ENCODE measurements at regions of chr6 and their contacts with region 1.

Region 1: GRCh38 chr6:157557559-157557958 is 176.6 kb downstream of the ZDHHC14 start:
- DNase-seq: no peak
- ATAC-seq: peak; percentile 29
- H3K4me3 Mint-ChIP-seq: peak overlapping the region; percentile 73
- H3K27ac Mint-ChIP-seq: peak overlapping the region; percentile 94
- H3K4me1 Mint-ChIP-seq: peaks cover 83% of the 10 kb centered on the region
- H3K27me3 Mint-ChIP-seq: no peaks in the 10 kb centered on the region
- CTCF ChIP-seq: no peak

Region 2: DNA sequence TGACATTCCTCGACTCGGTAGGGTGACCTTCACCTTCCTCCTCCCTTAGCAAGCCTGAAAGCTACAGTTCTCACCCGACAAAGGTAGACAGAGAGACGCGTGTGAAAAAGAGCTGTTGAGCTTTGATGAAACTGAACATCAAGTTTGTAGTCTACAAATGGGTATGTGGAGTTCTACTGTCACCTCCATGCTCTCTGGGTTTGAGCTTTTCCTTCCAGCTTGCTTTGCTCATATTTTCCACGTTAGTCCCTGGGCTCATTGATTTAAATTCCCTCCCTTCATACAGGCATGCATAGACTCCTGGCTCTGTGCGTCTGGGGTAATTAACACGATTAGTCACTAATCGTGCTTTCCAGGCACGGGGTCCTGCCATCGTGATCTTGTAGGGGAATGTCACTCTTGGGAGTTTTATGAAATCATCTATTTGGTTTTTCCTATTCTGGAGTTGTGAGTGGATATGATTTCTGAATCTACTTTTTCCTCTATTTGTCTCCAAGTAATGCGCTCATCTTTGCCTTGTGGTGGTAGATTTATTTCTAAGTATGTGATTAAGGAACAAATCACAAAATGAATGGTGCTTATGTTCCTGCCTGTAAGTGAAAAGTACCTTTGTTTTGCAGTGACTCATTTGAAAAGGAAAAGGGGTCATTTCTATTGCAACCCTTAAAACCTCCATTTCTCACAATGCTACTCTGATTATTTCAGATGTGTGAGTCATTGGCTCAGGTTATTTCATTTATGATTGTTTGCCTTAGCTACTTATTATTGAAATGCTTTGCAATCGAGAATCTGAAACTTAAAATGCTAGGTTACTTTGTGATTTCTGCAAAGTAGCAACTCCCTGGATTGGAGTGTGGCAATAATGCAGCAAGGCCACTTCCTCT is 22.0 kb before region 1 on chr6:
- CTCF ChIA-PET with region 1: no interaction called
- POLR2A ChIA-PET with region 1: interaction called, 14 read pairs
- intact Hi-C with region 1: loop called (anchors 2 kb)
- DNase-seq: no peak
- ATAC-seq: peak; percentile 45
- H3K4me3 Mint-ChIP-seq: peak overlapping the region; percentile 21
- H3K27ac Mint-ChIP-seq: peak overlapping the region; percentile 70
- H3K4me1 Mint-ChIP-seq: peaks cover 60% of the 10 kb centered on the region
- H3K27me3 Mint-ChIP-seq: no peaks in the 10 kb centered on the region
- CTCF ChIP-seq: no peak

Region 3: GRCh38 chr6:157571269-157571668 is 13.7 kb after region 1 on chr6:
- CTCF ChIA-PET with region 1: interaction called, 4 read pairs
- POLR2A ChIA-PET with region 1: interaction called, 18 read pairs
- intact Hi-C with region 1: no loop called
- DNase-seq: no peak
- ATAC-seq: no peak
- H3K4me3 Mint-ChIP-seq: no peak overlapping the region
- H3K27ac Mint-ChIP-seq: peak overlapping the region; percentile 53
- H3K4me1 Mint-ChIP-seq: peaks cover 51% of the 10 kb centered on the region
- H3K27me3 Mint-ChIP-seq: no peaks in the 10 kb centered on the region
- CTCF ChIP-seq: no peak